ENCODE measurements at regions of chr12 and their contacts with region 1.

Region 1: GRCh38 chr12:94133964-94134795 is 14.2 kb upstream of the PLXNC1 start:
- DNase-seq: no peak
- ATAC-seq: peak; percentile 97
- H3K4me3 ChIP-seq: no peak overlapping the region
- H3K27ac ChIP-seq: no peak overlapping the region
- H3K4me1 ChIP-seq: no peaks in the 10 kb centered on the region; the same call in 1 of the 2 replicates
- H3K27me3 ChIP-seq: no peaks in the 10 kb centered on the region
- CTCF ChIP-seq: peak; percentile 66 to 73 (median 70)
- EP300 ChIP-seq: no peak
- POLR2A ChIP-seq: no peak
- RAD21 ChIP-seq: peak; percentile 83

Region 2: DNA sequence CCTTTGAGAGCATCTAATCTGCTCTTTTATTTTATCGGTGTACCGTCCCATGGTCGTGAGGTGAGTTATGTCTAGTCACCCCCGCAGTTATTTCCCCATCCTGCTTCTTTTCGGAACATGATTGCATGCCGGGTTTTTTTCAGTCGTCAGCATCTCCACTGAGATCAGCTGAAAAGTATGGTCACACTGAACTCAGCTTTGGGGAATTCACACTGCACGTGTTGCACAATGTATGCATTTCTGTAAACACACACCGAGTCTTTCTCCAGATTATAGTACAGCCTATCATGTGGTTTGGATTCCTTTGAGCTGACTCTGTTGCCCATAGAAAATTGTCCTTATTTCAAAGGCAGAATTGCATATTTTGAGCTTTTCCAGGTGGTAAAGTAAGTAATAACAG is 38.8 kb after region 1 on chr12:
- CTCF ChIA-PET with region 1: interaction called, 14 read pairs
- POLR2A ChIA-PET with region 1: no interaction called
- RAD21 ChIA-PET with region 1: interaction called, 12 read pairs
- SMC1A ChIA-PET with region 1: interaction called, 3 read pairs
- in situ Hi-C with region 1: no loop called
- intact Hi-C with region 1: no loop called
- DNase-seq: no peak
- ATAC-seq: no peak
- H3K4me3 ChIP-seq: no peak overlapping the region
- H3K27ac ChIP-seq: peak overlapping the region; percentile 92
- H3K4me1 ChIP-seq: peaks cover 47% of the 10 kb centered on the region
- H3K27me3 ChIP-seq: no peaks in the 10 kb centered on the region
- CTCF ChIP-seq: no peak
- EP300 ChIP-seq: no peak
- POLR2A ChIP-seq: no peak
- RAD21 ChIP-seq: no peak

Region 3: DNA sequence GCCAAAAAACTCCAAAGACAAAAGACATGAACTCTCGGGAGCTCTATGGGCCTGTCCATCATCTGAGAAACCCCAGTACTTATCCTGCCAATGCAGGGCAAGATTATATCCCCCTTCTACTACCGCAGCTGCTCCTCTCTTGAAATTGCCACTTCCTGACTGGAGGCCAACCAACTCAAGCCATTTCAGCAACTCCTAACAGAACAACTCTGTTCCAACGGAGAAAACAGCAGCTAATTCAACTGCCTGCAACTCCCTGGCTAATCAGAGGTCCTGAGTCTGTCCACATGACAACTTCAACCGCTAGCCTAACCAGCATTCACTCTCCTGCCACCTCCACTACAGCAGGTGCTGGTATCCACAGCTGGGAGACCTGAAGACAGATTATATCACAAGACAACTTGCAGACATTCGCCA is 301.3 kb after region 1 on chr12:
- CTCF ChIA-PET with region 1: interaction called, 29 read pairs
- POLR2A ChIA-PET with region 1: no interaction called
- RAD21 ChIA-PET with region 1: interaction called, 13 read pairs
- SMC1A ChIA-PET with region 1: interaction called, 5 read pairs
- in situ Hi-C with region 1: no loop called
- intact Hi-C with region 1: no loop called
- DNase-seq: no peak
- ATAC-seq: peak; percentile 75
- H3K4me3 ChIP-seq: peak overlapping the region; percentile 12; the same call in 1 of the 2 replicates
- H3K27ac ChIP-seq: peak overlapping the region; percentile 65
- H3K4me1 ChIP-seq: peaks cover 11% of the 10 kb centered on the region
- H3K27me3 ChIP-seq: no peaks in the 10 kb centered on the region
- CTCF ChIP-seq: no peak
- EP300 ChIP-seq: no peak
- POLR2A ChIP-seq: no peak
- RAD21 ChIP-seq: no peak

Region 4: GRCh38 chr12:94525951-94526350 is 391.8 kb after region 1 on chr12:
- CTCF ChIA-PET with region 1: interaction called, 49 read pairs
- POLR2A ChIA-PET with region 1: no interaction called
- RAD21 ChIA-PET with region 1: interaction called, 24 read pairs
- SMC1A ChIA-PET with region 1: interaction called, 23 read pairs
- in situ Hi-C with region 1: loop called (anchors 5 kb)
- intact Hi-C with region 1: no loop called
- DNase-seq: no peak
- ATAC-seq: peak; percentile 34; the same call in 2 of the 3 replicates
- H3K4me3 ChIP-seq: no peak overlapping the region
- H3K27ac ChIP-seq: no peak overlapping the region
- H3K4me1 ChIP-seq: 0 out of 2 replicates have a peak, but pooled peaks cover 4% of the 10 kb centered on the region
- H3K27me3 ChIP-seq: no peaks in the 10 kb centered on the region
- CTCF ChIP-seq: no peak
- EP300 ChIP-seq: no peak
- POLR2A ChIP-seq: no peak
- RAD21 ChIP-seq: no peak

Region 5: GRCh38 chr12:94532490-94533422 is 398.6 kb after region 1 on chr12:
- CTCF ChIA-PET with region 1: interaction called, 49 read pairs
- POLR2A ChIA-PET with region 1: no interaction called
- RAD21 ChIA-PET with region 1: interaction called, 24 read pairs
- SMC1A ChIA-PET with region 1: interaction called, 23 read pairs
- in situ Hi-C with region 1: loop called (anchors 5 kb)
- intact Hi-C with region 1: loop called (anchors 1 kb)
- DNase-seq: peak; percentile 36
- ATAC-seq: peak; percentile 99
- H3K4me3 ChIP-seq: no peak overlapping the region
- H3K27ac ChIP-seq: no peak overlapping the region
- H3K4me1 ChIP-seq: no peaks in the 10 kb centered on the region
- H3K27me3 ChIP-seq: no peaks in the 10 kb centered on the region; a peak in 1 of 4 replicates
- CTCF ChIP-seq: peak; percentile 83 to 89 (median 86)
- EP300 ChIP-seq: no peak
- POLR2A ChIP-seq: no peak
- RAD21 ChIP-seq: peak; percentile 99

Measured in GM12878 (cell line).